GM13976 (cell line): ENCODE measurements at regions of chr12 and their contacts with region 1.

Region 1: DNA sequence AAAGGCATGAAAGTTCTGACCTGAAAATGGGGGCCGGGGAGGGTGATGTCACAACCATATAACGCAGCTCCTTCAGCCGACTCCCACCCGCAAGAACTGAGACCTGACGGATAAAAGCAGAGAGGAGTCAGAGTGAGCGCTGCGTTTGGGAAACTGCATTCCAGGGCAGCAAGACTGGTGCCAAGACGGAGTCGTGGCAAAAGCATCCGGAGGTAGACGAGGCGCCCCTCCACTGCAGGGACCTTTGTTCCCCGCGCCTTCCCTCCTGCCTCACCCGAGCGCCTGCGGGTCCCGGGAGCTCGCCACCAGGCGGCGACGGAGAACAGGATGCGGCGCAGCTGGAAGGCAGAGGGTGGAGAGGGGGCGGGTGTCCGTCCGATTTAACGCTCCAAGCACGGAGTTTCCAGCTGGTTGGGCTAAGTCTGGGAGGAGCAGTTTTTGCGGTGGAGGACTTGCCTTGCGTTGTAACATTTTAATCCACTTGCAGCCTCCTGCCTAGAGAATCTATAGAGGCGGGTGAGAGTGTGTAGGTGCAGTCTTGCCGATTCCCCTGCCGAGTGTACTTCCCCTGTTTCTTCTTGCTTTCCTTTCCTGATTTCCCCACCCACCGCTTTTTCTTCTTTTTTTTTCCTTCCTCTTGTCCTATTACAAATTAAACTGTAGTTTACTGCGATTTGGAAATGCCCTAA is 1.2 kb upstream of the CPNE8 start:
- DNase-seq: peak; percentile 78
- CTCF ChIP-seq: peak; percentile 93

Region 2: GRCh38 chr12:38332814-38333213 is 573.8 kb before region 1 on chr12:
- in situ Hi-C with region 1: loop called (anchors 10 kb)
- DNase-seq: no peak
- CTCF ChIP-seq: no peak

Region 3: GRCh38 chr12:38664661-38665269 is 241.9 kb before region 1 on chr12:
- in situ Hi-C with region 1: loop called (anchors 25 kb)
- DNase-seq: peak; percentile 5
- CTCF ChIP-seq: no peak

Region 4: GRCh38 chr12:39103552-39104165 is 197.0 kb after region 1 on chr12:
- in situ Hi-C with region 1: loop called (anchors 25 kb)
- DNase-seq: peak; percentile 70
- CTCF ChIP-seq: peak; percentile 71